Calu3 (cell line): ENCODE measurements at regions of chr6 and their contacts with region 1.

Region 1: GRCh38 chr6:40328405-40328987 is 258.7 kb downstream of the LRFN2 start:
- DNase-seq: peak; percentile 77
- H3K4me3 Mint-ChIP-seq: no peak overlapping the region
- H3K27ac Mint-ChIP-seq: no peak overlapping the region
- H3K4me1 Mint-ChIP-seq: no peaks in the 10 kb centered on the region
- H3K27me3 Mint-ChIP-seq: peaks cover 85% of the 10 kb centered on the region
- CTCF ChIP-seq: peak; percentile 75

Region 2: DNA sequence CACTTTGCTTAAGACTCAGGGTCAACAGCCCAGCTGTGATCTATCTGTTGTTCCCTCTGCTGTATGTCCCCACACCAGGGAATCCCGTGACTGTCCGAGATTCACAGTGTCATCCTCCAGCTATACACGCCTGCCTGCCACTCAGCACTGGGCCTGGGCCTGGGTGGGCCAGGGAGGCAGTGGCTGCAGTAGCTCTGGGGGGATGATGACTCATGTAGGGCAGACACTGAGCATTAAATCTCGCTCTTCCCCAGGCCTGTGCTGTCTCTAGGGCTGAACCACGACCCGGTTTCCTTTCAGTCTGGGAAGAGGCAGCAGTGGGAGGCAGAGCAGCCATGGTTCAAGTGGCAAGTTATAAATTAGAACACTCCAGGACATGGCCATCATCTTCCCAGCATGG is 84.7 kb after region 1 on chr6:
- CTCF ChIA-PET with region 1: no interaction called
- intact Hi-C with region 1: no loop called
- DNase-seq: no peak
- H3K4me3 Mint-ChIP-seq: no peak overlapping the region
- H3K27ac Mint-ChIP-seq: no peak overlapping the region
- H3K4me1 Mint-ChIP-seq: no peaks in the 10 kb centered on the region
- H3K27me3 Mint-ChIP-seq: peaks cover 79% of the 10 kb centered on the region
- CTCF ChIP-seq: no peak

Region 3: DNA sequence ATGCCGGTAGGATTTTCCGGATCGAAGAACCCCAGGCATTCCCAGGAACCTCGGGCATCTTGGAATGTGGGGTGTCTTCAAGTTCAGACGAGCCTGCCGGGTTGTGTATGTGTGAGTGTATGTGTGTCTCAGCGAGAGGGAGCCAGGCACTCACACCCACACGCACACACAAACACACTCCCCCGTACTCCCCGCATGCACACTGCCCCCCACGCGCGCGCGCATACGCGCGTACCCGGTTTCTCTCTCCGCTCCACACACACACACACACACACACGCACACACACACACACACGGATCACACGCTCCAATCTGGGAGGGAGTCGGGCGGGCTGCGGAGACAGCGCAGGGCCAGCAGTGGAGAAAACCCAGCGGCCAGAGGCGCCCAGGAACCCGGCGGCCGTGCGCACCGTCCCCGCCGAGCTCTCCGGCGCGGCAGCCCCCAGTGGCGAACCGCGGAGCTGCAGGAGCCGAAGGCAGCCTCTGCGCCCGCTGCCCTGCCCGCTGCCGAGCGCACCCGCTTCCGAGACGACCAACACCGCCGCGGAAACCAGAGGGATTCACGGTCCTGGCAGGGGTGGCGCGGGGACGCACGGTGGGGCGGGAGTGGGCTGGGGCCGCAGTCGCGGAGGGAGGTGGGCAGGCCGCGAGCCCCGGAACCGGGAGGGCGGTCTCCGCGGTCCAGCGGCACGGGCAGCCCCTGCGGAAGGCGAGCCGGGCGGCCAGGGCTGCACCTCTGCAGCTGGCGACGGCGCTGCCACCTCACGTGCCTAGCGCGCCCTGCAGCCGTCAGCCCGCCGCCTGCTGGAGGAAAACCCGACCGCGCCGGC is 259.0 kb after region 1 on chr6 and contains the start of gene LRFN2:
- CTCF ChIA-PET with region 1: interaction called, 7 read pairs
- intact Hi-C with region 1: loop called (anchors 5 kb)
- DNase-seq: peak; percentile 91
- H3K4me3 Mint-ChIP-seq: peak within 1 kb of the TSS; percentile 93
- H3K27ac Mint-ChIP-seq: no peak within 1 kb of the TSS
- H3K4me1 Mint-ChIP-seq: no peaks in the 10 kb centered on the region
- H3K27me3 Mint-ChIP-seq: peaks cover 69% of the 10 kb centered on the region
- CTCF ChIP-seq: peak; percentile 83
- total RNA-seq, gene LRFN2: not detected in 2 replicates

Region 4: DNA sequence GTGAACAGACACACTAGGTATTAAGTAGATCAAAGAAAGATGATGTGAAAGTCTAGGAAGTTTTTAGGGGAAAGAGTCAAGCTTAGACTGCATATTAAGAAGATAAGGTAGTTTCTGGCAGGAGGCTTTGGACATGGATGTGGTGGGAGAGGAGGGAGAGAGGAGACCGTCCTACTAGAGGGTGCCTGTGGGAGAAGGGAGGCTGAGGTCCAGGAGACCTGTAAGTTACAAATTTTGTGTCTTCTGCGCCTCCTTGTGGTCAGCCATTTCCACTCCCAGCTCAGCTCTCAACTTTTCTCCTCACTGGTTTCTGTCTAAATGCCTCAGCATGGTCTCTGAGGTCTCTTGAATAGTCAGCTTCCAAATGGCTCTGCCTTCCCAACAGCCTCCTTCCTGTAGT is 517.1 kb after region 1 on chr6:
- CTCF ChIA-PET with region 1: interaction called, 3 read pairs
- intact Hi-C with region 1: loop called (anchors 1 kb)
- DNase-seq: peak; percentile 59
- H3K4me3 Mint-ChIP-seq: no peak overlapping the region
- H3K27ac Mint-ChIP-seq: no peak overlapping the region
- H3K4me1 Mint-ChIP-seq: no peaks in the 10 kb centered on the region
- H3K27me3 Mint-ChIP-seq: peaks cover 86% of the 10 kb centered on the region
- CTCF ChIP-seq: peak; percentile 90

Region 5: DNA sequence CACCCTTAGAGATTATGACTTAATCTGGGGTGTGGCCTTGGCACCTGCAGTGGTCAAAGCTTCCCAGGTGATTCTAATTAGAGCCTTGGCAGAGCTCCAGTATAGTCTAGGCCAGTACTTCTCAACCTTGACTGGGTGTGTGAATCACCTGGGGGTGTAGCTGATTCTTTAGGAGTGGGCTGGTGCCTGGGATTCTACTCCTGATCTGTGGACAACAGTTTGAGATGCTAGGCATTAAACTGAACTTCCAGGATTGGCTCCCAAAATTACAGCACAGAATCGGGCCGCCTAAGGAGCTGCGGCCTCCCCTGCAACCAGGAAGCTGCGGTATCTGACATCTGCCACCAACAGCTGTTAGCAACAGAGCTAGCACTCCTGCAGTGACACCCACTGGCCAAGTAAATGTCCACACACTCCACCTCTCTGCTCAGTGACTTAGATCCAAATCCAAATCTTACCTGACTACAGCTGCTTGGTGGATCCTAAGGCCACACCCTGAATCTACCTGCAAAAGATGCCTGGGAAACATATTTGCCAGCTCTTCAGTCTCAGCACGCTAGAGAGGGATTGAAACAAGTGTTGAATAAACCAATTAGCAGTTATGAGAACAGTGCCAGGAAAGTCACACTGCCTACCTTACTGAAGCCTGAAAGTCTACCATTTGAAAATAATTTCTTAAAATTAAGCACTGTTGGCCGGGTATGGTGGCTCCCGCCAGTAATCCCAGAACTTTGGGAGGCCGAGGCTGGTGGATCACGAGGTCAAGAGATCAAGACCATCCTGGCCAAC is 583.9 kb after region 1 on chr6:
- CTCF ChIA-PET with region 1: no interaction called
- intact Hi-C with region 1: loop called (anchors 5 kb)
- DNase-seq: peak; percentile 72
- H3K4me3 Mint-ChIP-seq: no peak overlapping the region
- H3K27ac Mint-ChIP-seq: no peak overlapping the region
- H3K4me1 Mint-ChIP-seq: peaks cover 9% of the 10 kb centered on the region
- H3K27me3 Mint-ChIP-seq: peaks cover 43% of the 10 kb centered on the region
- CTCF ChIP-seq: peak; percentile 78

Region 6: GRCh38 chr6:41027799-41028628 is 699.5 kb after region 1 on chr6:
- CTCF ChIA-PET with region 1: no interaction called
- intact Hi-C with region 1: loop called (anchors 5 kb)
- DNase-seq: peak; percentile 90
- H3K4me3 Mint-ChIP-seq: no peak overlapping the region
- H3K27ac Mint-ChIP-seq: no peak overlapping the region
- H3K4me1 Mint-ChIP-seq: peaks cover 17% of the 10 kb centered on the region
- H3K27me3 Mint-ChIP-seq: no peaks in the 10 kb centered on the region
- CTCF ChIP-seq: peak; percentile 97

Region 7: DNA sequence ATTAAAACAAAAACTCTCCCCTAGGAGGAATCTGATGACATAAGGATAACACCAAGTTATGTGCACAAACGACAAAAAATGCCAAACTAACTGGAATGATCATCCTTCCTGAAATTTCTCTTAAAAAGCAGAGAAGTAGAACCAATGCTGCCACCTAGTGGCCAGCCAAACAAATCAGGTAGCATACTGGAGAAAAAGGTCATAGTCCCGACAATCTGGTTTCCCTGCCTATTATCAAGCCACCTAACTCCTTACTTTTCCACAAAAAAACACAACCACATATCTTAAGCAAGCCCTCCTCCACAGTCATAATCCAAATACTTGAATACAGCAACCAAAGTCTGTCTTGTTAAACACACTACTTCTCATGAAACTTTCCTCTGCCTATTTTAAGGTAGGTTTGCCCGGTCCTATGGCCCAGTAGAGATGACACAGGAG is 738.4 kb after region 1 on chr6:
- CTCF ChIA-PET with region 1: no interaction called
- intact Hi-C with region 1: loop called (anchors 5 kb)
- DNase-seq: peak; percentile 77
- H3K4me3 Mint-ChIP-seq: no peak overlapping the region
- H3K27ac Mint-ChIP-seq: peak overlapping the region; percentile 71
- H3K4me1 Mint-ChIP-seq: peaks cover 56% of the 10 kb centered on the region
- H3K27me3 Mint-ChIP-seq: no peaks in the 10 kb centered on the region
- CTCF ChIP-seq: peak; percentile 79